Heart right ventricle (tissue), 16 donors: ENCODE measurements at regions of chr3 and their contacts with region 1.

Region 1: DNA sequence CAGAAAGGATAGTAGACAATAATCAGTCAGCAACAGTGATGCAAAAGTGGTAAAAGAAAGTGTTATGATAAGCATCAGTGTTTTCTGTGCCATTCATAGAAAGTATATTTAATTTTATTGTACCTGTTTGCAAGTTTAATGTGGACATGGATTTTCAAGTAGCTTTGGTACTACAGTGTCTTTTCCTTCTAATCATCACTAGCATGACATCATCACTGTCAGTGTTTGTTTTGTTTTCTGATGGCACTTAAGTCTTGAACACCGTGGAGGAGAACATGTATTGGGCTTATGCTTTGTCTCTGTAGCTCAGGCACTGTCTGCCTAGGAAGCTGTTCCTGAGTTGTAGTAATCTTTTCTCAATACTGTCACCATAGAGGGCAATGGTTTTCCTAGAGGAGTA is 41.9 kb downstream of the SETD5 start:
- DNase-seq: no peak
- ATAC-seq: peak in 3 of 8 donors; percentile 24 to 48 (median 28)
- H3K4me3 ChIP-seq: no peak overlapping the region
- H3K27ac ChIP-seq: no peak overlapping the region
- H3K4me1 ChIP-seq: peaks cover 0 to 22% (median 0%) of the 10 kb centered on the region in 9 donors
- H3K27me3 ChIP-seq: no peaks in the 10 kb centered on the region
- CTCF ChIP-seq: no peak

Region 2: DNA sequence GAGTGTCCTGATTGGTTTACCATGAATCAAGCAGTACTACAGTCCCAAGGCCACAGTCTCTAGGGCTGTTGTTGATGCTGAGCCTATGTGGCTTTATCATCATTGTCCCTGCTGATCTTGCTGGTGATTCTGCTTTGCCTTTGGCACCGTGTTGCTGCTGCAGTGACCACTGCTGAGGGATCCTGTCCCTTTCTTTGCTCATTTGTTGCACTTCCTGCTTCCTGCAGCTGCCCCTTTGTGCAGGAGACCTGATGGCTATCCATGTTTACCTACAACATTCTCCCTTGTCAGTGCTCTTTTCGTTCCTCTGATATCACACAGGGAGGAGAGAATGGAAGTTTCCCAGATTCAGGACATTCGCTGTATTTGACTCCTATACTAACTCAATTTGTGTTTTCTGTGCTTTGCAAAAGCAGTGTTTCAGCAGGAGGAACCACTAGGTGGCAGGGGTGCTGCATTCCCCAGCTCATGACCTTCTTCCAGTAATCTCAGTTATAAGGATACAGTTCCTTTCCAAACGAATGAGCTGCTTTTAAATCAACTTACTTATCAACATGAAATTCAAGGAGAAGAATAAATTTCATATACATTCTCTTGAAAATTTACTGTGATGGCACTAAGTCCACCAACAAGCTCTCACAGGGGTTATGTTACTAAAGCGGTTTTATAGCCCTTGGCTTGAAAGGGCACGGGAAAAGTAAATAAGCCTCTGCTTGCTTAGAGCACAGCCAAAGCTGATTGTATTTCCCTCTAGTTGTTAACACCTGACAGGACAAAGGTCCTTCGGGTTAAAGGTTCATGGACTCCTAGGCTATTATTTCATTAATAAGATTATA is 86.2 kb before region 1 on chr3:
- intact Hi-C with region 1: loop called in 1 of 10 experiments (anchors 10 kb)
- DNase-seq: peak; percentile 45 to 70
- ATAC-seq: peak; percentile 61 to 87 (median 80)
- H3K4me3 ChIP-seq: no peak overlapping the region
- H3K27ac ChIP-seq: no peak overlapping the region
- H3K4me1 ChIP-seq: peaks cover 0 to 14% (median 4%) of the 10 kb centered on the region in 9 donors
- H3K27me3 ChIP-seq: no peaks in the 10 kb centered on the region
- CTCF ChIP-seq: peak; percentile 77 to 95 (median 88)

Region 3: GRCh38 chr3:9362731-9363530 is 76.4 kb before region 1 on chr3 and contains the start of gene THUMPD3:
- intact Hi-C with region 1: loop called in 4 of 10 experiments (anchors 5 to 10 kb)
- DNase-seq: peak; percentile 90
- ATAC-seq: peak; percentile 97 to 100 (median 99)
- H3K4me3 ChIP-seq: peak within 1 kb of the TSS; percentile 40 to 90 (median 71)
- H3K27ac ChIP-seq: peak within 1 kb of the TSS; percentile 23 to 95 (median 90)
- H3K4me1 ChIP-seq: peaks cover 0 to 31% (median 19%) of the 10 kb centered on the region in 9 donors
- H3K27me3 ChIP-seq: no peaks in the 10 kb centered on the region
- CTCF ChIP-seq: no peak
- total RNA-seq, gene THUMPD3: 40.3 to 72.1 (median 52.5) TPM

Region 4: GRCh38 chr3:9373465-9373864 is 65.9 kb before region 1 on chr3:
- intact Hi-C with region 1: loop called in 2 of 10 experiments (anchors 5 to 10 kb)
- DNase-seq: no peak
- ATAC-seq: no peak
- H3K4me3 ChIP-seq: no peak overlapping the region
- H3K27ac ChIP-seq: no peak overlapping the region
- H3K4me1 ChIP-seq: peaks cover 0 to 5% (median 0%) of the 10 kb centered on the region in 9 donors
- H3K27me3 ChIP-seq: no peaks in the 10 kb centered on the region
- CTCF ChIP-seq: no peak

Region 5: GRCh38 chr3:9384141-9384853 is 55.0 kb before region 1 on chr3:
- intact Hi-C with region 1: loop called in 4 of 10 experiments (anchors 5 to 10 kb)
- DNase-seq: no peak
- ATAC-seq: no peak
- H3K4me3 ChIP-seq: no peak overlapping the region
- H3K27ac ChIP-seq: no peak overlapping the region
- H3K4me1 ChIP-seq: peaks cover 0 to 12% (median 3%) of the 10 kb centered on the region in 9 donors
- H3K27me3 ChIP-seq: no peaks in the 10 kb centered on the region
- CTCF ChIP-seq: no peak

Region 6: GRCh38 chr3:9468460-9468859 is 29.1 kb after region 1 on chr3:
- intact Hi-C with region 1: no loop called
- DNase-seq: no peak
- ATAC-seq: no peak
- H3K4me3 ChIP-seq: no peak overlapping the region
- H3K27ac ChIP-seq: no peak overlapping the region
- H3K4me1 ChIP-seq: no peaks in the 10 kb centered on the region
- H3K27me3 ChIP-seq: no peaks in the 10 kb centered on the region
- CTCF ChIP-seq: no peak